Common myeloid progenitor, CD34-positive (primary cell): ENCODE measurements at regions of chr2 and their contacts with region 1.

Region 1: GRCh38 chr2:222038067-222038802 is 260.6 kb downstream of the PAX3 start:
- DNase-seq: peak in 2 of 3 donors; percentile 8 to 11
- H3K4me3 ChIP-seq: no peak overlapping the region
- H3K27ac ChIP-seq: no peak overlapping the region
- H3K4me1 ChIP-seq: no peaks in the 10 kb centered on the region
- H3K27me3 ChIP-seq: peaks cover 0 to 2% (median 0%) of the 10 kb centered on the region in 5 experiments

Region 2: DNA sequence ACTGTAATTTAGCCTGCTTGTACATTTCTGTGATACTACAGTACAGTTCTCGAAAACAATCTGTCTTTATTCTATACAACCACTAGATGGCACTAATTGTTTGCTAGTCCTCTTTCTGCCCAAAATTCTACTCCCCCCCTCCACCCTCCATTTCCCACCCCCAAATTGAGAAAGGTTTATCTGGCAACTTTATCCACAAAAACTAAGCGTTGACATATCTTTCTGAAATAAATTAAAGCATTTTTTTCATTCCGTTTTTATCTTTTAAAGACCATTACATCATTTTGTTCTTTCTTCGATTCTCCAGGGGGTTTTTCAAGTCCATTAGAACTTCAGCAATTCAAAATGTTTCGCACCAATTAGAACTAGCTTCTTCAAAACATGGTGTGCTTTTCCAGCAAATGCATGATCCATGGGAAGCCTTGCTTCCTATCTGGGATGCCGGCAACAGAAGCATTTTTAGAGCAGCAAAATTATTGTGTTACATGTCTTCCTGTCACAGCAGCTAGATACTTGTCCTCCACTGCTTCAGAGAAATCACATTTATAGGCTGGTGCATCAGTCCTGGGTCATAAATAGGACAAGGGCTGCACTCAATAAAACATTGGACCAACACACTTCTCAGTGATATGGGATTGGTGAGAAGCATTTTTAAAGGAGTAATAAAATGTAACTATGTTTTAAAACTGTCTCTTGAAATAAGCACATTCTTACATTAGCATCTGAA is 19.3 kb after region 1 on chr2:
- CTCF ChIA-PET with region 1: interaction called, 10 read pairs
- POLR2A ChIA-PET with region 1: no interaction called
- DNase-seq: peak in 2 of 3 donors; percentile 13 to 14
- H3K4me3 ChIP-seq: no peak overlapping the region
- H3K27ac ChIP-seq: no peak overlapping the region
- H3K4me1 ChIP-seq: no peaks in the 10 kb centered on the region
- H3K27me3 ChIP-seq: peaks cover 11 to 71% (median 18%) of the 10 kb centered on the region in 5 experiments